ENCODE measurements at regions of chr9 and their contacts with region 1.

Region 1: GRCh38 chr9:19230356-19231125 is at the start of gene DENND4C:
- DNase-seq: peak; percentile 57 to 91 (median 83)
- ATAC-seq: peak; percentile 85
- H3K4me3 ChIP-seq: peak within 1 kb of the TSS; percentile 85 to 96
- H3K4me3 Mint-ChIP-seq: no peak within 1 kb of the TSS
- H3K27ac ChIP-seq: peak within 1 kb of the TSS; percentile 80 to 82
- H3K27ac Mint-ChIP-seq: peak within 1 kb of the TSS; percentile 90
- H3K4me1 ChIP-seq: peaks cover 23% of the 10 kb centered on the region
- H3K4me1 Mint-ChIP-seq: peaks cover 22% of the 10 kb centered on the region
- H3K27me3 ChIP-seq: no peaks in the 10 kb centered on the region
- H3K27me3 Mint-ChIP-seq: no peaks in the 10 kb centered on the region
- CTCF ChIP-seq: no peak
- total RNA-seq, gene DENND4C: 27.4 to 29.8 TPM

Region 2: GRCh38 chr9:19102631-19103345 is 127.8 kb before region 1 on chr9 and contains the start of gene HAUS6:
- CTCF ChIA-PET with region 1: no interaction called
- POLR2A ChIA-PET with region 1: no interaction called
- intact Hi-C with region 1: loop called (anchors 1 to 2 kb)
- DNase-seq: peak; percentile 73 to 98 (median 92)
- ATAC-seq: peak; percentile 92
- H3K4me3 ChIP-seq: peak within 1 kb of the TSS; percentile 51 to 71
- H3K4me3 Mint-ChIP-seq: peak within 1 kb of the TSS; percentile 96
- H3K27ac ChIP-seq: peak within 1 kb of the TSS; percentile 58 to 83
- H3K27ac Mint-ChIP-seq: peak within 1 kb of the TSS; percentile 94
- H3K4me1 ChIP-seq: peaks cover 19% of the 10 kb centered on the region
- H3K4me1 Mint-ChIP-seq: peaks cover 29% of the 10 kb centered on the region
- H3K27me3 ChIP-seq: no peaks in the 10 kb centered on the region
- H3K27me3 Mint-ChIP-seq: no peaks in the 10 kb centered on the region
- CTCF ChIP-seq: no peak
- total RNA-seq, gene HAUS6: 14.2 to 16.5 TPM

Region 3: DNA sequence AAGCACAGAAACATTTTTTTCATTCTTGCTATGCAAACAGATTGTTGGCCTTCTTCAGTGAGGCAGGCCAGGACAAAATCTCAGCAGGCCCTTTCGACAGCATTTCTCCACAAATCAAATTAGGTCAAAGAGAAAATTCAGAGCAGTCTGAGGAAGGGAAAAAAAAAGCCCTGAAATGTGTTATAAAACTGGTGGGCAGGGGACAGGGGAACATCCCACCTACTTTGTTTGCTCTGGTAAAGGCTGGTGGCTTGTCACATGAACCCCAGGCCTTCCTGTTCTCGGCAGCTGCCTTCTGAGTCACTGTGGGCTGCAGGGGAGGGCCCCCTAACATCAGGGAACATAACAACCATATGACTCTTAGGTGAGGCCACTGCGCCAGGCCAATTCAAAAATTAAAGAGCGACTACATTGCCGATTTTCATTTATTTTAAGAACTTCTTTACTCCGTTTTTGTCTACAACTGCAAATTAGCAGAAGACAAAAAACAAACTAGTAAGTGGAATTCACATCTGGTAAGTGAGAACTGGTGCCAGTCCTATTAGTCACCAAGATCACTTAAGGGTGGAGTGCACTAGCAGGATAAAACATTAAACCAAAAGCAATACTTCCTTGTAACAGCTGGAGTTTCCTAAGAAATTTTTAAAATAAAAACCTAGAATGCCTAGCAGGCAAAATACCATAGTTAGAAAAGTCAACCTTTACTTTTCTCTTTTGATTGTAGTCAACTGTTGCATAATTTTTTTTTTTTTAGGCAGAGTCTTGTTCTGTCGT is 46.2 kb before region 1 on chr9:
- CTCF ChIA-PET with region 1: interaction called, 6 read pairs
- POLR2A ChIA-PET with region 1: interaction called, 12 read pairs
- intact Hi-C with region 1: loop called (anchors 1 kb)
- DNase-seq: peak; percentile 49 to 94 (median 82)
- ATAC-seq: peak; percentile 99
- H3K4me3 ChIP-seq: peak overlapping the region in 1 of 2 experiments; percentile 3
- H3K4me3 Mint-ChIP-seq: peak overlapping the region; percentile 71
- H3K27ac ChIP-seq: peak overlapping the region; percentile 55 to 87
- H3K27ac Mint-ChIP-seq: peak overlapping the region; percentile 96
- H3K4me1 ChIP-seq: peaks cover 34% of the 10 kb centered on the region
- H3K4me1 Mint-ChIP-seq: peaks cover 25% of the 10 kb centered on the region
- H3K27me3 ChIP-seq: no peaks in the 10 kb centered on the region
- H3K27me3 Mint-ChIP-seq: no peaks in the 10 kb centered on the region
- CTCF ChIP-seq: no peak

Region 4: DNA sequence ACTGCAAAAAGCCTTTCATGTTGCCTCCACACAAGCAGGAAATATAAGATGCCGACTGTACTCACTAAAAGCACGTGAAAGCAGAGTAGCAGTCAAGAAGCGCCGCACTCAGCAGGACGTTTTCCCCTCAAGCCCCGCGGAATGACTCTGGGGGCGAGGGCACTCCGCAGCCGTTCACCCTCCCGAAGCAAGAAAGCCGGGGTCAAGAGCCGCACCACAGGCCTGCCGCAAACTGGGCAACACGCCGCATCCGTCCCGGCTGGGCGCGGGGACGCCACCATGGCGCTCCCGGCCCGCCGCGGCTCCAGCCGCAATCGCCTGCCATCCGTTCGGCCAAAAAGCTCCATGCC is 149.1 kb after region 1 on chr9:
- CTCF ChIA-PET with region 1: no interaction called
- POLR2A ChIA-PET with region 1: interaction called, 13 read pairs
- intact Hi-C with region 1: loop called (anchors 1 to 2 kb)
- DNase-seq: peak in 5 of 9 experiments; percentile 37 to 71 (median 53)
- ATAC-seq: peak; percentile 49
- H3K4me3 ChIP-seq: peak overlapping the region; percentile 67 to 90
- H3K4me3 Mint-ChIP-seq: peak overlapping the region; percentile 95
- H3K27ac ChIP-seq: peak overlapping the region; percentile 85 to 93
- H3K27ac Mint-ChIP-seq: peak overlapping the region; percentile 98
- H3K4me1 ChIP-seq: peaks cover 29% of the 10 kb centered on the region
- H3K4me1 Mint-ChIP-seq: peaks cover 40% of the 10 kb centered on the region
- H3K27me3 ChIP-seq: no peaks in the 10 kb centered on the region
- H3K27me3 Mint-ChIP-seq: no peaks in the 10 kb centered on the region
- CTCF ChIP-seq: no peak

Region 5: DNA sequence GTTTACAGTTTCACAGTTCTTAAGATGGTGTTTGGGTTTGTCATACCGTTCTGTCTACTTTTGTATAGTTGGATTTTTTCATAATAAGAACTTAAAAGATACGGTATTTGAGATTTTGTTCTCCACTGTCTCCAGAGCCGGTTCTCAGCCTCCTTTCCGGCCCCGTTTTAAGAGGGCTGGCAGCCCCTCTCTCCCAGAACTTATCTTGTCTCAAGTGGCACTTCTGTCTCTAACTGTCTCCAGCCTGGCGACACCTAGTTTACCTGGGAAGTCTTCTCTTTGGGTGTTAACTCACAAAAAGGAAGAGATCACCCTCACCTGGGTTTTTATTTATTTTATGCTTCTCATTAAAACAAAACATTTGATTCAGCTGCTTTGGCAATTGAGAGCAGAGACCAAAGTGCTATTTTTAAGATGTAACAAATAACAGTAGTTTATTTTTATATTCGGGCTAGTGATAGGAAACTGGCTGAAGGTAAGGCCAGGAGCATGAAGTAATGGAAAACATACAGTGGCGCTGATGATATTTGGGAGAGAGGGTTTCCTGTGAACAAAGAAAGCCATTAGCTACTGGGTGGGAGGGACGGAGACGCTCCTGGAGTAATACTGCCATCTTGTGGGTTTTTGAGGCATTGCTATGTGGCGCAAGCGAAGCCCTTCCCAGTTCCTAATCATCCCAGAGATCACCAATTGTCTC is 226.6 kb after region 1 on chr9:
- CTCF ChIA-PET with region 1: no interaction called
- POLR2A ChIA-PET with region 1: no interaction called
- intact Hi-C with region 1: loop called in 1 of 2 experiments (anchors 5 kb)
- DNase-seq: peak; percentile 10 to 81 (median 59)
- ATAC-seq: peak; percentile 96
- H3K4me3 ChIP-seq: no peak overlapping the region
- H3K4me3 Mint-ChIP-seq: peak overlapping the region; percentile 24
- H3K27ac ChIP-seq: no peak overlapping the region
- H3K27ac Mint-ChIP-seq: no peak overlapping the region
- H3K4me1 ChIP-seq: peaks cover 7% of the 10 kb centered on the region
- H3K4me1 Mint-ChIP-seq: peaks cover 5% of the 10 kb centered on the region
- H3K27me3 ChIP-seq: no peaks in the 10 kb centered on the region
- H3K27me3 Mint-ChIP-seq: peaks cover 5% of the 10 kb centered on the region
- CTCF ChIP-seq: peak; percentile 89